ENCODE measurements at regions of chr16 and their contacts with region 1.

Region 1: GRCh38 chr16:4350787-4351659 is at the start of gene PAM16:
- ATAC-seq: peak; percentile 68 to 94 (median 92)
- H3K4me3 ChIP-seq: peak within 1 kb of the TSS; percentile 82 to 95 (median 94)
- H3K27ac ChIP-seq: peak within 1 kb of the TSS; percentile 62 to 87
- H3K4me1 ChIP-seq: peaks cover 9 to 14% of the 10 kb centered on the region in 2 donors
- total RNA-seq, gene PAM16: 52.1 to 82.1 (median 66.8) TPM

Region 2: GRCh38 chr16:4402439-4403132 is 51.6 kb after region 1 on chr16:
- in situ Hi-C with region 1: loop called in 2 of 9 experiments (anchors 5 to 10 kb)
- ATAC-seq: peak; percentile 92 to 97 (median 96)
- H3K4me3 ChIP-seq: no peak overlapping the region
- H3K27ac ChIP-seq: no peak overlapping the region
- H3K4me1 ChIP-seq: no peaks in the 10 kb centered on the region

Region 3: GRCh38 chr16:4416200-4417032 is 65.4 kb after region 1 on chr16 and contains the start of gene CORO7:
- in situ Hi-C with region 1: loop called in 1 of 9 experiments (anchors 10 kb)
- ATAC-seq: peak; percentile 76 to 97 (median 92)
- H3K4me3 ChIP-seq: peak within 1 kb of the TSS; percentile 62 to 83 (median 65)
- H3K27ac ChIP-seq: peak within 1 kb of the TSS; percentile 36 to 63
- H3K4me1 ChIP-seq: peaks cover 12 to 14% of the 10 kb centered on the region in 2 donors
- total RNA-seq, gene CORO7: 6.0 to 30.1 (median 26.8) TPM

Region 4: DNA sequence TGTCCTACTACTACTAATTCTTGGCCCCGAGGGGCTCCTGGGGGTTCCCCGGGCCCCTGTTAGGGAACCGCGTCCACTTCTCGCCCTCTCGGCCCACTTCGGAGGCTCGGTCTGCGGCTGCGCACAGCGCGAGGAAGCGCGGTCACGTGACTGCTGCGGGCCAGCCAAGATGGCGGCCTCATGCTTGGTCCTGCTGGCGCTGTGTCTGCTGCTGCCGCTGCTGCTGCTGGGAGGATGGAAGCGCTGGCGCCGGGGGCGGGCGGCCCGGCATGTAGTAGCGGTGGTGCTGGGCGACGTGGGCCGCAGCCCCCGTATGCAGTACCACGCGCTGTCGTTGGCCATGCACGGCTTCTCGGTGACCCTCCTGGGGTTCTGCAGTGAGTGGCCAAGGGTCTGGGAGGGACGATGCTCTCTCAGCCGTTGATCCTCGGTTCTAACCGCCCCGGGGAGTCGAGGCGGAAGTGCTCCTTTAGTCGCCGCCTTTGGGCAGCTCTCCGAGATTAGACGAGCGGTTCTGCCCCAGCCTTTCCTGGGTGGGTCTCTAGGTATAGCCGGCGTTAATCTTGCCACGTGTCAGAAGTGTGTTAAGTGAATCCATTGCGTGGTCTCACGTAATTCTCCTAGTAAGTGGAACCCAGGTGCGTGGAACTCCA is 720.8 kb after region 1 on chr16 and contains the start of gene ALG1:
- in situ Hi-C with region 1: no loop called
- ATAC-seq: peak; percentile 78 to 90 (median 86)
- H3K4me3 ChIP-seq: peak within 1 kb of the TSS; percentile 49 to 85 (median 63)
- H3K27ac ChIP-seq: peak within 1 kb of the TSS; percentile 72 to 91
- H3K4me1 ChIP-seq: peaks cover 5 to 7% of the 10 kb centered on the region in 2 donors
- total RNA-seq, gene ALG1: 6.6 to 43.8 (median 18.4) TPM